BJ (cell line): ENCODE measurements at regions of chrX and their contacts with region 1.

Region 1: GRCh38 chrX:141662781-141663180 is 35.8 kb downstream of the SPANXD start:
- DNase-seq: no peak
- H3K4me3 ChIP-seq: no peak overlapping the region
- H3K27me3 ChIP-seq: no peaks in the 10 kb centered on the region
- CTCF ChIP-seq: no peak

Region 2: DNA sequence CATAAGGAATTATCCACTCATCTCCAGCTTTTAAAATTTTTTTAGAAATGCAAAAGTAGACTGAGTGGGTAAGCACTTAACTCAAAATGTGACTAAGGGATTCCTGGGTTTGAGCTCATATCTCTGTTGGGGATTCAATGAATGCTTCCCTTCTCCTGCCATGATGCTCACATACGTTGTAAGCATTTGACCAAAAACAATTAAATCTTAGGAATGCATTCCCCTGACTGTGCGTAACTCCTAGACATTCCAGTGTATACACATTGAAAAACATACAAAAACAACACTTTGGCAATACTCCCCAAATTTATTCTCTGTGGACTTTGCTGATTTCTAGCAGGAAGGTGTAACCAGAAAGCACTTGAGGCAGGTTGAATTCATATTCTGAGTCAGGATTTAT is 43.4 kb before region 1 on chrX:
- CTCF ChIA-PET with region 1: no interaction called
- POLR2A ChIA-PET with region 1: interaction called, 19 read pairs
- DNase-seq: no peak
- H3K4me3 ChIP-seq: no peak overlapping the region
- H3K27me3 ChIP-seq: no peaks in the 10 kb centered on the region
- CTCF ChIP-seq: no peak

Region 3: GRCh38 chrX:141924293-141924692 is 261.5 kb after region 1 on chrX:
- CTCF ChIA-PET with region 1: no interaction called
- POLR2A ChIA-PET with region 1: no interaction called
- DNase-seq: no peak
- H3K4me3 ChIP-seq: no peak overlapping the region
- H3K27me3 ChIP-seq: no peaks in the 10 kb centered on the region
- CTCF ChIP-seq: no peak